HEK293T (cell line): ENCODE measurements at regions of chr10 and their contacts with region 1.

Region 1: DNA sequence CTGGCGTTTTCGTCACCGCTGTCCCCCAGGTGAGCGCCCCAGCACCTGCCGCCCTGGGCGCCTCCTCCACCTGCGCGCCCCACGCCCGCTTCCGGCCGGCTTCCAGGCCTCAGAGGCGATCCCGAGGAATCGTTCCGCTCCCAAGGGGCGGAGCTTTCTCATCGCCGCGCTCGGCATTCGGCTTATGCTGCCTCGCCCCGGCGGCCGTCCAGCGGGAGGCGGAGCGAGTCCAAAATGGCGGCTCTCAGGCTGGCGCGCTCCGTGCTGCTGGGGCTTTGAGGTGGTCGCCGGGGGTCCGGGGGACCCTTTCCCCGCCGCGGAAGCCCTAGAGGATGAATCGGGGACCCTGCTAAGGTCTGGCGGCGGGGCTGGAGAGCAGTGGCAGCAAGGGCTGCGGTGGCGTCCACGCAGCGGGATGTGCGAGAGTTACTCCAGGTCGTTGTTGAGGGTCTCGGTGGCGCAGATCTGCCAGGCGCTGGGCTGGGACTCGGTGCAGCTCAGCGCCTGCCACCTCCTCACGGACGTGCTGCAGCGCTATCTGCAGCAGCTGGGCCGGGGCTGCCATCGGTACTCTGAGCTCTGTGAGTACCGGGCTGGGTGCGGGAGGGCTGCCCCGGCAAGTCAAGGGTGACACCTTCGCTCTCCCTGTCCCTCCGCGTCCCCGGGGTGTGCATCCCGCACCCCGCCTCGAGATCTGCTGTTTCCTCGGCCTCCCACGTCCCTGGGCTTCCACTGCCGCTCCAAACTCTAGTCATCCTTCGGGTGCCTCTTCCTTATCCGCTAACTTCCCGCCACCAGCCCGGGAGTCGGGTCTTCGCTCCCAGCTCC is at the start of gene TAF3:
- DNase-seq: peak; percentile 95

Region 2: DNA sequence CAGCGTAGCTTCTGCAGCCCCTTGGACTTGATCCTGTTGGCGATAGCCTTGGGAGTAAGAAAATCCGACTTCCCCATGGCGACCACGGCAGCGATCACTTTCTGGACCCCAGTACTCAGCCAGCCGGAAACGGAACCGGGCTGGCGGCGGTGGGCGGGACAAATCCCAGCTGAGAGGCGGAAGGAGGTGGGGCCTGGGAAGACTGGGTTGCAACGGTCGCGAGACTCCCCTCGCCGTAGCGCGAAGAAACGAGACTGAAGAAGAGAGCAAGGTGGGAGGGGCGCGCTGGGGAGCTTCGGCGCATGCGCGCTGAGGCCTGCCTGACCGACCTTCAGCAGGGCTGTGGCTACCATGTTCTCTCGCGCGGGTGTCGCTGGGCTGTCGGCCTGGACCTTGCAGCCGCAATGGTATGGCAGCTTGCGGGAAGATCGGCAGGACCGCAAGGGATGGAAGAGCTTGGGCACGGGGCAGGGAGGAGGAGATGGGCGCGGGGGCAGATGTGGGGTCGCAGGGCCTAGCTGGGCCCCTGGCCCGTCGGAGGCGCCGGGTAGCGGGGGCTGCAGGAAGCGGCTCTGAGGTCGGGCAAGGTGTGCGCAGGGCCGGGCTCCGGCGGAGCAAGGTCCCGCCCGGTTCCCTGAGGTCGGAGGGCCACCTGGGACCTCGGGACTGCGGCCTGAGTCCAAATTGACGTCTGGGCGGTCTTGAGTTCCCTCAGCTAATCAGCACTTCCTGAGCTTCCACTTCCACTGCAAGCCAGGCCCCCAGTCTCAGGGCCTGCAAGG is 30.5 kb before region 1 on chr10 and contains the starts of genes ATP5F1C and KIN:
- CTCF ChIA-PET with region 1: no interaction called
- POLR2A ChIA-PET with region 1: interaction called, 36 read pairs
- DNase-seq: peak; percentile 98

Region 3: GRCh38 chr10:7797582-7797981 is 20.9 kb before region 1 on chr10:
- CTCF ChIA-PET with region 1: no interaction called
- POLR2A ChIA-PET with region 1: interaction called, 14 read pairs
- DNase-seq: no peak

Region 4: GRCh38 chr10:7887174-7887816 is 68.8 kb after region 1 on chr10:
- CTCF ChIA-PET with region 1: no interaction called
- POLR2A ChIA-PET with region 1: no interaction called
- DNase-seq: no peak